ENCODE measurements at regions of chr10 and their contacts with region 1.

Region 1: DNA sequence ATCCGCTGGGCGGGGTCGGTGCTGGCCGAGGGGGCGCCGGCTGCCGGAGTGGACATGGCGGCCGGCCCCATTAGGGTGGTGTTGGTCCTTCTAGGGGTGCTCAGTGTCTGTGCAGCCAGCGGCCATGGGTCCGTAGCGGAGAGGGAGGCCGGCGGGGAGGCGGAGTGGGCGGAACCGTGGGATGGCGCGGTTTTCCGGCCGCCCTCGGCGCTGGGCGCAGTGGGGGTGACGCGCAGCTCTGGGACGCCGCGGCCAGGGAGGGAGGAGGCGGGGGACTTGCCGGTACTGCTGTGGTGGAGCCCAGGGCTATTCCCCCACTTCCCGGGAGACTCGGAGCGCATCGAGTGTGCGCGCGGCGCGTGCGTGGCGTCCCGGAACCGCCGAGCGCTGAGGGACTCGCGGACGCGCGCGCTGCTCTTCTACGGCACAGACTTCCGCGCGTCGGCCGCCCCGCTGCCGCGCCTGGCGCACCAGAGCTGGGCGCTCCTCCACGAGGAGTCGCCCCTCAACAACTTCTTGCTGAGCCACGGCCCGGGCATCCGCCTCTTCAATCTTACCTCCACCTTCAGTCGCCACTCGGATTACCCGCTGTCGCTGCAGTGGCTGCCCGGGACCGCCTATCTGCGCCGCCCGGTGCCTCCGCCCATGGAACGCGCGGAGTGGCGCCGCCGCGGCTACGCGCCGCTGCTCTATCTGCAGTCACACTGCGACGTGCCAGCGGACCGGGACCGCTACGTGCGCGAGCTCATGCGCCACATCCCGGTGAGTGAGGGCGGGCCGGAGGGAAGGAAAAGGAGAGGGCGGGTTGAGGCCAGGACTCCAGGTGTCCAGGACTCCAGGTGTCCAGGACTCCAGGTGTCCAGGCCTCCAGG is 9.3 kb upstream of the CHCHD1 start:
- DNase-seq: peak; percentile 52 to 95 (median 78)
- ATAC-seq: peak; percentile 66
- H3K4me3 ChIP-seq: peak overlapping the region; percentile 92 to 96
- H3K4me3 Mint-ChIP-seq: peak overlapping the region; percentile 96
- H3K27ac ChIP-seq: peak overlapping the region; percentile 86 to 94
- H3K27ac Mint-ChIP-seq: peak overlapping the region; percentile 96
- H3K4me1 ChIP-seq: peaks cover 37% of the 10 kb centered on the region
- H3K4me1 Mint-ChIP-seq: peaks cover 59% of the 10 kb centered on the region
- H3K27me3 ChIP-seq: no peaks in the 10 kb centered on the region
- H3K27me3 Mint-ChIP-seq: no peaks in the 10 kb centered on the region
- CTCF ChIP-seq: no peak

Region 2: GRCh38 chr10:73730153-73730906 is 42.2 kb before region 1 on chr10:
- CTCF ChIA-PET with region 1: interaction called, 3 read pairs
- POLR2A ChIA-PET with region 1: interaction called, 8 read pairs
- intact Hi-C with region 1: loop called in 1 of 2 experiments (anchors 2 kb)
- DNase-seq: peak; percentile 86 to 95 (median 89)
- ATAC-seq: peak; percentile 89
- H3K4me3 ChIP-seq: peak overlapping the region; percentile 98 to 100
- H3K4me3 Mint-ChIP-seq: peak overlapping the region; percentile 100
- H3K27ac ChIP-seq: peak overlapping the region; percentile 87 to 91
- H3K27ac Mint-ChIP-seq: peak overlapping the region; percentile 99
- H3K4me1 ChIP-seq: peaks cover 13% of the 10 kb centered on the region
- H3K4me1 Mint-ChIP-seq: peaks cover 29% of the 10 kb centered on the region
- H3K27me3 ChIP-seq: no peaks in the 10 kb centered on the region
- H3K27me3 Mint-ChIP-seq: no peaks in the 10 kb centered on the region
- CTCF ChIP-seq: no peak

Region 3: DNA sequence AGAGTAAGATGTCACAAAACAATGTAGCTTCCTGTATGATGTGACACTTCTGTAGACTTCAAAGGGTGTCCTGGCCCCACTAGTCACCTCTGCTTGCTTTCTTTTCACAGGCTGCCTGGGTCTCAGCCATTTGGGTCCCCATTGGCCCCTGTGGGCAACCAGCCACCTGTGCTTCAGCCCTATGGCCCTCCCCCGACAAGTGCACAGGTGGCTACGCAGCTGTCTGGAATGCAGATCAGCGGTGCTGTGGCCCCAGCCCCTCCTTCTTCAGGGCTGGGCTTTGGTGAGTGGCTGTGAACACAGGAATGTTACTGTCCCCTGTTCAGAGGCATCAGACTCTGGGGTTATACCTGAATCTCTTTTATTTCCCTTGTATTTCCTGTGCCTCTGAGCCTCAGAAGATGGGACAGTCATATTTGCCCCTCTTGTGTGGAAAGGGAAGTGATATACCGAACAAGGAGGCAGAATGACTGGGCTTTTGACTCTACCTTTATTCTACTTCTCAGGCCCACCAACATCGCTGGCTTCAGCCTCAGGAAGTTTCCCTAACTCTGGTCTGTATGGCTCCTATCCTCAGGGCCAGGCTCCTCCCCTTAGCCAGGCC is 12.9 kb before region 1 on chr10:
- CTCF ChIA-PET with region 1: interaction called, 19 read pairs
- POLR2A ChIA-PET with region 1: interaction called, 28 read pairs
- intact Hi-C with region 1: no loop called
- DNase-seq: peak in 8 of 9 experiments; percentile 43 to 94 (median 71)
- ATAC-seq: peak; percentile 90
- H3K4me3 ChIP-seq: peak overlapping the region in 1 of 2 experiments; percentile 28
- H3K4me3 Mint-ChIP-seq: peak overlapping the region; percentile 64
- H3K27ac ChIP-seq: peak overlapping the region; percentile 44 to 97
- H3K27ac Mint-ChIP-seq: peak overlapping the region; percentile 91
- H3K4me1 ChIP-seq: peaks cover 29% of the 10 kb centered on the region
- H3K4me1 Mint-ChIP-seq: peaks cover 66% of the 10 kb centered on the region
- H3K27me3 ChIP-seq: no peaks in the 10 kb centered on the region
- H3K27me3 Mint-ChIP-seq: no peaks in the 10 kb centered on the region
- CTCF ChIP-seq: no peak

Region 4: GRCh38 chr10:73785221-73785720 is 12.8 kb after region 1 on chr10 and contains the start of gene ZSWIM8:
- CTCF ChIA-PET with region 1: interaction called, 34 read pairs
- POLR2A ChIA-PET with region 1: interaction called, 95 read pairs
- intact Hi-C with region 1: loop called (anchors 1 kb)
- DNase-seq: peak; percentile 70 to 96 (median 85)
- ATAC-seq: peak; percentile 84
- H3K4me3 ChIP-seq: peak within 1 kb of the TSS; percentile 68 to 81
- H3K4me3 Mint-ChIP-seq: peak within 1 kb of the TSS; percentile 99
- H3K27ac ChIP-seq: peak within 1 kb of the TSS; percentile 62 to 82
- H3K27ac Mint-ChIP-seq: peak within 1 kb of the TSS; percentile 95
- H3K4me1 ChIP-seq: peaks cover 41% of the 10 kb centered on the region
- H3K4me1 Mint-ChIP-seq: peaks cover 52% of the 10 kb centered on the region
- H3K27me3 ChIP-seq: no peaks in the 10 kb centered on the region
- H3K27me3 Mint-ChIP-seq: no peaks in the 10 kb centered on the region
- CTCF ChIP-seq: no peak
- total RNA-seq, gene ZSWIM8: 68.2 to 72.4 TPM

Region 5: GRCh38 chr10:73810735-73811465 is 38.4 kb after region 1 on chr10:
- CTCF ChIA-PET with region 1: interaction called, 6 read pairs
- POLR2A ChIA-PET with region 1: interaction called, 27 read pairs
- intact Hi-C with region 1: loop called (anchors 1 kb)
- DNase-seq: peak; percentile 19 to 79 (median 66)
- ATAC-seq: peak; percentile 12
- H3K4me3 ChIP-seq: peak overlapping the region; percentile 56 to 87
- H3K4me3 Mint-ChIP-seq: peak overlapping the region; percentile 89
- H3K27ac ChIP-seq: peak overlapping the region; percentile 71 to 91
- H3K27ac Mint-ChIP-seq: peak overlapping the region; percentile 95
- H3K4me1 ChIP-seq: peaks cover 48% of the 10 kb centered on the region
- H3K4me1 Mint-ChIP-seq: peaks cover 44% of the 10 kb centered on the region
- H3K27me3 ChIP-seq: no peaks in the 10 kb centered on the region
- H3K27me3 Mint-ChIP-seq: no peaks in the 10 kb centered on the region
- CTCF ChIP-seq: no peak

Region 6: GRCh38 chr10:73874267-73875138 is 102.0 kb after region 1 on chr10 and contains the start of gene CAMK2G:
- CTCF ChIA-PET with region 1: interaction called, 12 read pairs
- POLR2A ChIA-PET with region 1: interaction called, 4 read pairs
- intact Hi-C with region 1: loop called (anchors 1 to 5 kb)
- DNase-seq: peak; percentile 55 to 93 (median 81)
- ATAC-seq: peak; percentile 72
- H3K4me3 ChIP-seq: peak within 1 kb of the TSS; percentile 93 to 95
- H3K4me3 Mint-ChIP-seq: peak within 1 kb of the TSS; percentile 87
- H3K27ac ChIP-seq: peak within 1 kb of the TSS; percentile 57 to 82
- H3K27ac Mint-ChIP-seq: peak within 1 kb of the TSS; percentile 90
- H3K4me1 ChIP-seq: peaks cover 60% of the 10 kb centered on the region
- H3K4me1 Mint-ChIP-seq: peaks cover 75% of the 10 kb centered on the region
- H3K27me3 ChIP-seq: no peaks in the 10 kb centered on the region
- H3K27me3 Mint-ChIP-seq: no peaks in the 10 kb centered on the region
- CTCF ChIP-seq: no peak
- total RNA-seq, gene CAMK2G: 28.4 to 28.9 TPM

Measured in CD8-positive, alpha-beta T cell (primary cell).